ENCODE measurements at regions of chr5 and their contacts with region 1.

Region 1: GRCh38 chr5:32767948-32768427 is 56.9 kb downstream of the NPR3 start:
- DNase-seq: peak; percentile 89 to 97
- H3K4me3 ChIP-seq: peak overlapping the region; percentile 6; the same call in 1 of the 2 replicates
- H3K27ac ChIP-seq: peak overlapping the region; percentile 74
- H3K4me1 ChIP-seq: peaks cover 18% of the 10 kb centered on the region
- H3K27me3 ChIP-seq: no peaks in the 10 kb centered on the region
- CTCF ChIP-seq: no peak

Region 2: GRCh38 chr5:32842813-32843530 is 75.0 kb after region 1 on chr5:
- CTCF ChIA-PET with region 1: no interaction called
- POLR2A ChIA-PET with region 1: no interaction called
- intact Hi-C with region 1: loop called (anchors 5 kb)
- DNase-seq: peak; percentile 58 to 92
- H3K4me3 ChIP-seq: no peak overlapping the region
- H3K27ac ChIP-seq: peak overlapping the region; percentile 6; the same call in 1 of the 2 replicates
- H3K4me1 ChIP-seq: peaks cover 16% of the 10 kb centered on the region
- H3K27me3 ChIP-seq: peaks cover 25% of the 10 kb centered on the region
- CTCF ChIP-seq: no peak

Region 3: DNA sequence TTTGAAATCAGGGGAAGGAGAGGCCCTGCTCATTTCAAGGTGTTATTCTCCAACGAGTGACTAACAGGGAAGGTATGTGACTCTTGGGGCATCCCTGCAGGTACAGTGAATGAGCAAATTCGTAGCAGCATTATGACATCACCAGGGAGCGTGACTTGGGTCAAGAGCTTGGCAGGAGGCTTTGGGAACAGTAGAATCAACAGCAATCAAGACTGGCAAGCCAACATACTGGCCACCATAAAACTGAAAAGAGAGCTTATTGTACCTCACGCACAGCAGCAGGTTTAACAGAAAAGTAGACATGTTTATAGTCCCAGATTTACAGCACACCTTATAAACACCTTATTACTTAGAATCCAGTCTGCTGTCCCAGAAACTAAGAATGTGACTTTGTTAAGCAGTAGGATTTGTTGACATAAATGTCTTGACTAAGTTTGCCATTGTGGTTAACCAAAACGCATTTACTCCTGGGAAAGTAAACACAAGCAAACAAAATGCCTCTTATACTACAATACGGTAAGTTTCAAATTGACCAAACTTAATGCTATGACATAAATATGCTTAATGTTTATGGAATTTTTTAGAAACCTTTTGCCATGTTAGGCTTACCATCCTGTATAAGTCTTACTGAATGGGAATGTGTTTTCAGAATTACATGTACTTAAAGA is 240.9 kb after region 1 on chr5:
- CTCF ChIA-PET with region 1: no interaction called
- POLR2A ChIA-PET with region 1: no interaction called
- intact Hi-C with region 1: loop called (anchors 1 kb)
- DNase-seq: peak; percentile 73 to 92
- H3K4me3 ChIP-seq: no peak overlapping the region
- H3K27ac ChIP-seq: peak overlapping the region; percentile 48
- H3K4me1 ChIP-seq: peaks cover 14% of the 10 kb centered on the region
- H3K27me3 ChIP-seq: no peaks in the 10 kb centered on the region
- CTCF ChIP-seq: no peak

Region 4: GRCh38 chr5:33401482-33402390 is 633.7 kb after region 1 on chr5:
- CTCF ChIA-PET with region 1: no interaction called
- POLR2A ChIA-PET with region 1: no interaction called
- intact Hi-C with region 1: loop called (anchors 5 kb)
- DNase-seq: peak; percentile 76 to 92
- H3K4me3 ChIP-seq: no peak overlapping the region
- H3K27ac ChIP-seq: peak overlapping the region; percentile 61
- H3K4me1 ChIP-seq: peaks cover 32% of the 10 kb centered on the region
- H3K27me3 ChIP-seq: no peaks in the 10 kb centered on the region
- CTCF ChIP-seq: no peak

Measured in PC-9 (cell line).